ENCODE measurements at regions of chr14 and their contacts with region 1.

Region 1: DNA sequence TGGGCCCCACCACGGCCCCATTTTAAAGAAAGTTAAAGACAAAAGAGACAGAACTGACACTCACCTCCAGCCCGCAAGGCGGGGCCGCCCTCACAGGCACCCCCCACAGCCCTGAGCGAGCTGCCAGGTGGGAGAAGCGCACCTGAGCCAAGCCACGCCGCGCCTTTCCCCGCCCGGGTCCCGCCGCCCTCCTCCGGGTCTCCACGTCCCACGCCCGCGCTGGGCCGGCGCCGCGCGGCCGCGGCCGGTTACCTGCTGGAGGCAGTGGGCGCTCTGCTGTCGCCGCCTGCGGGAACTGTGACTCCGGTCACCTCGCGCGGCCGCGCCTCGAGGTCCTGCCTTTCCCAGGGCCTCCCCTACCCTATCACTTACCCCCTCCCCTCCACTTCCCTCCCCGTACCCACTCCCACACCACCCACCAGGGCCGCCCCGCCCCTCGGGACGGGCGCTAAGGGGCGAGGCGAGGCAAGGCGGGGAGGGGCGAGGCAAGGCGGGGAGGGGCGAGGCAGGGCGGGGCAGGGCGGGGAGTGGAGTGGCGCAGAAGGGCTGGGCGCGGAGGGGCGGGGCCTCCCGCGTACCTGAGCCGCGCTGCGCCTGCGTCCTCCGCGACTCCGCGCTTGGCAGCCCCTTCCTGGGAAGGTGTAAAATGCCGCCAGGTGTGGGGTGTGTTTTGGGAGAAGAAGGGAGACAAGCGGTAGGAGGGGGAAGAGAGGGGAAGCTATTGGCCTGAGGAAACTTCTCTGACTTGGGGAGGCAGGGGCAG is 31.0 kb downstream of the TC2N start:
- DNase-seq: peak; percentile 90
- ATAC-seq: peak; percentile 98
- H3K4me3 Mint-ChIP-seq: peak overlapping the region; percentile 89
- H3K27ac Mint-ChIP-seq: peak overlapping the region; percentile 91
- H3K4me1 Mint-ChIP-seq: peaks cover 73% of the 10 kb centered on the region
- H3K27me3 Mint-ChIP-seq: no peaks in the 10 kb centered on the region
- CTCF ChIP-seq: no peak

Region 2: DNA sequence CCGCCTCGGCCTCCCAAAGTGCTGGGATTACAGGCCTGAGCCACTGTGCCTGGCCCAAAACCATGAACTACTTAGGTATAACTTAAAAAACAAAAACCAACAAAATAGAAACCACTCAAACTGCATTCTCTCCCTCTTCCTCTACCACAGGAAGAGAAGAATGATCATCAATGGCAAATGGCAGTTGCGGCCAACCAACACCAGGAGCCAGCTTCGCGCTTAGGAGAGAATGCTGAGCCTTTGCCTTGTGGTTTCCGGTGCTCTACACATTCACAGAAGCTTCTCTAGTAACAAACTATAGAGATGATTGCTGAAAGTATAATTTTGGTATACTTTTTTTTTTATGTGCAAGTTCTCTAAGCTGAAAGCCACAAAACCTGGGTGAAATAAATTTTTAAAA is 121.5 kb before region 1 on chr14:
- CTCF ChIA-PET with region 1: no interaction called
- POLR2A ChIA-PET with region 1: no interaction called
- intact Hi-C with region 1: no loop called
- DNase-seq: peak; percentile 69
- ATAC-seq: peak; percentile 85
- H3K4me3 Mint-ChIP-seq: peak overlapping the region; percentile 43
- H3K27ac Mint-ChIP-seq: peak overlapping the region; percentile 80
- H3K4me1 Mint-ChIP-seq: peaks cover 6% of the 10 kb centered on the region
- H3K27me3 Mint-ChIP-seq: no peaks in the 10 kb centered on the region
- CTCF ChIP-seq: peak; percentile 43

Region 3: DNA sequence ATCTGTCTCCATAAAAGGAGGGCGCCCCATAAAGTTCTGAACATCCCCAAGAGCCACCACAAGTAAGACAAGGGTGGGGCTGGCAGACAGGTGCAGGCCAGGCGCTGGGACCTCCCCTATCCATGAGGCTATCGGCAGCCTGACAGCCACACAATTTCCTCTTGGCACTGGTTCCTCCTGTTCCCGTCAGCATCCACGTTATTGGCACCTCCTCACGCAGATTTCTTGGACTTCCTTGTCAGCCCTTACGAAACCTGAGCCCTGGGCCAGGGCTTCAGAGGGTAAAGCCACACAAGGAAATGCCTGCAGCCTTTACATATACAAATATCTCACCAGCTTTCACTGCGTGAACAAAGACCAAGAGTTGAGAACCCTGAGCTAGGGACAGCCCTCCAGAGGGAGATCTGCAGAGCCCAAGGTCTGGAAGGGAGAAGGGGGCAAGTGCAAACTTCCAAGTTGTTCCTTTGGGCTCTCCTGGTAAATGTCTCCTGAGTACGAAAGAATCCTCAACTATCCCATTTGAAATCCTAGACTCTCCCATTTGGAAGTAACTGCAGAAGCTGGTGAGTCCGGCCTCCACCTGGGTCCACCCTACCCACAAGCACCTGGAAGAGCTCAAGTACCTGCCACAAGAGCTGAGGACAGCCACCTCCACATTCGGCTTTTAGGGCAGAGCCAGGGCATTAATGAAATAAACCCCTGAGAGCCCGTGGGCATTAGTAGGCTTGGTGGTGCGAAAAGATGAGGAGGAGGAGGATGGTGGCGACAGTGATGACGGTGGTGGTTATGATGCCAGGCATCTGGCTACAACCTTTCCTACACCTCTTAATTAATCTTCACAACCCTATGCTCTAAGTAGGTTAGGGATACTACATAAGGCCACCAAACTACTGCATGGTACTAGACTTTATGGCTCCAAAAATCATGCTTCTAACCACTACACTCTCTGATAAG is 36.5 kb after region 1 on chr14:
- CTCF ChIA-PET with region 1: no interaction called
- POLR2A ChIA-PET with region 1: interaction called, 5 read pairs
- intact Hi-C with region 1: loop called (anchors 5 kb)
- DNase-seq: peak; percentile 42
- ATAC-seq: no peak
- H3K4me3 Mint-ChIP-seq: peak overlapping the region; percentile 44
- H3K27ac Mint-ChIP-seq: peak overlapping the region; percentile 87
- H3K4me1 Mint-ChIP-seq: peaks cover 81% of the 10 kb centered on the region
- H3K27me3 Mint-ChIP-seq: no peaks in the 10 kb centered on the region
- CTCF ChIP-seq: no peak

Region 4: DNA sequence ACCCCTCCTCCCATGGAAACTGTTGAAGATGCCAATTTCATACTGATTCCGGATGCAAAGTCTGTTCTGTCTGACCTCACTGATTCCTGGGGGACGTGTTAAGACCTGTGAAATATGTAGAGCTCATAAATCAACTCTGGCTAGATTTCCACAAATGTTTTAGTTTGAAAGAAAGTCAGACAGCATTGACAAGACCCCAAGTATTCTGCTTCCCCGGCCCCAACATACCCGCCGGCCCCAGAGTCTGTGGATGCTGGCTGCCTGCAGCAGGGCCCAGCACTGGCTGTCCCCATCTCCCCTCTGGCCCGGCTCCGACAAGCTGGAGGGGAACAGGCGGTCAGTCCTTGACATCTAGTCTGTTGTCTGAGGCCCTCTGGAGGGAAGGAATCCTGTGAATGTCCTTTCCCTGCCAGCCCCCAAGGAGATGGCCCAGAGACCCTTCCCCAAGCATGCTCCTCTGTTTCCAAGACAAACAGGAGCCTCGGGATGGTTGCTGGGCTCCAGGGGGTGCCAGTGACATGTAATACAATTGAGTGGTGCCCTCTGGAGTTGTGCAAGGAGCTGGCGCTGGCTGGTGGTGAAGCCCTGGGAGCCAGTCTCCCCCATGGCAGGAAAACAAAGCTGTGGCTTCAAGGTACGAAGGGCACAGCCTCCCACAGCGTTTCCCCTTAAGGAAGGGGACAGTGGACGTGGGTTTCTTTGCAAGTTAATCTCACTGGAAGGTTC is 88.9 kb after region 1 on chr14:
- CTCF ChIA-PET with region 1: no interaction called
- POLR2A ChIA-PET with region 1: no interaction called
- intact Hi-C with region 1: no loop called
- DNase-seq: no peak
- ATAC-seq: no peak
- H3K4me3 Mint-ChIP-seq: no peak overlapping the region
- H3K27ac Mint-ChIP-seq: no peak overlapping the region
- H3K4me1 Mint-ChIP-seq: no peaks in the 10 kb centered on the region
- H3K27me3 Mint-ChIP-seq: no peaks in the 10 kb centered on the region
- CTCF ChIP-seq: no peak